Activated CD4-positive, alpha-beta T cell treated with anti-CD3 and anti-CD28 coated beads for 36 hours (primary cell): ENCODE measurements at regions of chr5 and their contacts with region 1.

Region 1: GRCh38 chr5:149828161-149828884 is 98.2 kb downstream of the PPARGC1B start:
- DNase-seq: peak; percentile 91
- ATAC-seq: peak; percentile 66
- H3K4me3 Mint-ChIP-seq: no peak overlapping the region
- H3K27ac Mint-ChIP-seq: no peak overlapping the region
- H3K4me1 Mint-ChIP-seq: peaks cover 7% of the 10 kb centered on the region
- H3K27me3 Mint-ChIP-seq: no peaks in the 10 kb centered on the region

Region 2: GRCh38 chr5:149422366-149423048 is 405.8 kb before region 1 on chr5:
- CTCF ChIA-PET with region 1: no interaction called
- POLR2A ChIA-PET with region 1: no interaction called
- intact Hi-C with region 1: no loop called
- DNase-seq: peak; percentile 32
- ATAC-seq: peak; percentile 47
- H3K4me3 Mint-ChIP-seq: no peak overlapping the region
- H3K27ac Mint-ChIP-seq: no peak overlapping the region
- H3K4me1 Mint-ChIP-seq: peaks cover 15% of the 10 kb centered on the region
- H3K27me3 Mint-ChIP-seq: no peaks in the 10 kb centered on the region

Region 3: GRCh38 chr5:149636851-149637246 is 191.5 kb before region 1 on chr5:
- CTCF ChIA-PET with region 1: interaction called, 41 read pairs
- POLR2A ChIA-PET with region 1: no interaction called
- intact Hi-C with region 1: loop called (anchors 1 kb)
- DNase-seq: peak; percentile 81
- ATAC-seq: peak; percentile 49
- H3K4me3 Mint-ChIP-seq: no peak overlapping the region
- H3K27ac Mint-ChIP-seq: no peak overlapping the region
- H3K4me1 Mint-ChIP-seq: peaks cover 13% of the 10 kb centered on the region
- H3K27me3 Mint-ChIP-seq: no peaks in the 10 kb centered on the region

Region 4: DNA sequence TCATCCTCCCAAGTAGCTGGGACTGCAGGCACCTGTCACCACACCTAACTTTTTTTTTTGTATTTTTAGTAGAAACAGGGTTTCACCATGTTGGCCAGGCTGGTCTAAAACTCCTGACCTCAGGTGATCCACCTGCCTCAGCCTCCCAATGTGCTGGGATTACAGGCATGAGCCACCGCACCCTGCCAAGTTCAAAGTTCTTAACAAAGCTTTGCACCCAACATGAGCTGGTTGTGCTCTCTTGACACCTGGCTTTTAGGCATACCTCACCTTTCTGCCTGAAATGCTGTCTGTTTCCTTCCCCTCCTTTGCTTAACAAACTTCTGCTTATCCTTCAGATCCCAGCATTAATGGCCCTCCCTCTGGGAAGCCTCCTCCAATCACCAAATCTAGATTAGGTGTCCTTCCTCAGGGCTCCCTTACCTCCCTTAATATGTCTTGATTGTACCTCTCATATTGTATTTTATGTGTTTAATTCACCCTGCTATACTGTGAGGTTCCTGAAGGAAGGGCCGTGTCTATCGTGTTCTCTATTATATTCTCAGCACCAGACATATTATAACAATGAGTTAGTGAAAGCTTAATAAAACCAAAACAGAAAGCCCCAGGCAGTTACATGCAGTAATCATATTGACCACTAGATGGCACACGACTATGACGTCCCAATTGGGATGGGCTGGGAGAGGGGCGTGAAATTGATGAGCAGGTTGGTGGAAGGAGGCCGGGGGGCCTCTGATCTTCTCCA is 161.1 kb before region 1 on chr5:
- CTCF ChIA-PET with region 1: interaction called, 26 read pairs
- POLR2A ChIA-PET with region 1: no interaction called
- intact Hi-C with region 1: loop called (anchors 1 to 5 kb)
- DNase-seq: peak; percentile 46
- ATAC-seq: no peak
- H3K4me3 Mint-ChIP-seq: no peak overlapping the region
- H3K27ac Mint-ChIP-seq: no peak overlapping the region
- H3K4me1 Mint-ChIP-seq: no peaks in the 10 kb centered on the region
- H3K27me3 Mint-ChIP-seq: peaks cover 3% of the 10 kb centered on the region

Region 5: GRCh38 chr5:149731639-149732323 is 96.5 kb before region 1 on chr5:
- CTCF ChIA-PET with region 1: interaction called, 3 read pairs
- POLR2A ChIA-PET with region 1: no interaction called
- intact Hi-C with region 1: loop called in 1 of 2 experiments (anchors 1 kb)
- DNase-seq: peak; percentile 90
- ATAC-seq: peak; percentile 48
- H3K4me3 Mint-ChIP-seq: peak overlapping the region; percentile 79
- H3K27ac Mint-ChIP-seq: no peak overlapping the region
- H3K4me1 Mint-ChIP-seq: peaks cover 2% of the 10 kb centered on the region
- H3K27me3 Mint-ChIP-seq: no peaks in the 10 kb centered on the region

Region 6: DNA sequence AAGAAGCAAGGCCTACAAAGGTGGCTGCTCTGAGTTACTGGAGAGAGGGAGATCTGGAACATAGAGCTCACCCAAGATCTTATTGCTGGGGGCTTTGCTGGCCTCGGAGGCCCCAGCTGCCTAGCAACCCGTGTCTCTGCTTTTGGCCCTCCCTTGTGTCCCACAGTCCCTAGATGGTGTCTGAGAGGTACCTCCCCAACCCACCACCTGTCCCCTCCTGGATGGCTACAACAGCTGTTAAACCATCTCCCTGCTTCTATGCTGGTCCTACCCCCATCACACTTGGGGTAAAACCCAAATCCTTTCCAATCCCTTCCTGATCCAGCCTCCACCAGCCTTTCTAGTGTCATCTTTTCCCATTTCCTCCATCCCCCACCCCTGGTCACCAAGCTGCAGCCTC is 11.7 kb before region 1 on chr5:
- CTCF ChIA-PET with region 1: interaction called, 17 read pairs
- POLR2A ChIA-PET with region 1: no interaction called
- intact Hi-C with region 1: no loop called
- DNase-seq: no peak
- ATAC-seq: no peak
- H3K4me3 Mint-ChIP-seq: no peak overlapping the region
- H3K27ac Mint-ChIP-seq: no peak overlapping the region
- H3K4me1 Mint-ChIP-seq: no peaks in the 10 kb centered on the region
- H3K27me3 Mint-ChIP-seq: no peaks in the 10 kb centered on the region